ENCODE measurements at regions of chr16 and their contacts with region 1.

Region 1: GRCh38 chr16:84617791-84618580 is at the start of gene COTL1:
- DNase-seq: peak; percentile 97
- H3K4me3 ChIP-seq: peak within 1 kb of the TSS; percentile 75 to 93 (median 91)
- H3K27ac ChIP-seq: peak within 1 kb of the TSS; percentile 77
- H3K4me1 ChIP-seq: peaks cover 36% of the 10 kb centered on the region
- H3K27me3 ChIP-seq: no peaks in the 10 kb centered on the region
- CTCF ChIP-seq: no peak
- total RNA-seq, gene COTL1: 79.2 to 202 TPM

Region 2: GRCh38 chr16:84277237-84277823 is 340.7 kb before region 1 on chr16:
- CTCF ChIA-PET with region 1: no interaction called
- dilution Hi-C with region 1: no loop called
- in situ Hi-C with region 1: no loop called
- intact Hi-C with region 1: loop called (anchors 1 kb)
- DNase-seq: peak; percentile 8
- H3K4me3 ChIP-seq: no peak overlapping the region
- H3K27ac ChIP-seq: no peak overlapping the region
- H3K4me1 ChIP-seq: no peaks in the 10 kb centered on the region
- H3K27me3 ChIP-seq: no peaks in the 10 kb centered on the region
- CTCF ChIP-seq: peak; percentile 84 to 87

Region 3: DNA sequence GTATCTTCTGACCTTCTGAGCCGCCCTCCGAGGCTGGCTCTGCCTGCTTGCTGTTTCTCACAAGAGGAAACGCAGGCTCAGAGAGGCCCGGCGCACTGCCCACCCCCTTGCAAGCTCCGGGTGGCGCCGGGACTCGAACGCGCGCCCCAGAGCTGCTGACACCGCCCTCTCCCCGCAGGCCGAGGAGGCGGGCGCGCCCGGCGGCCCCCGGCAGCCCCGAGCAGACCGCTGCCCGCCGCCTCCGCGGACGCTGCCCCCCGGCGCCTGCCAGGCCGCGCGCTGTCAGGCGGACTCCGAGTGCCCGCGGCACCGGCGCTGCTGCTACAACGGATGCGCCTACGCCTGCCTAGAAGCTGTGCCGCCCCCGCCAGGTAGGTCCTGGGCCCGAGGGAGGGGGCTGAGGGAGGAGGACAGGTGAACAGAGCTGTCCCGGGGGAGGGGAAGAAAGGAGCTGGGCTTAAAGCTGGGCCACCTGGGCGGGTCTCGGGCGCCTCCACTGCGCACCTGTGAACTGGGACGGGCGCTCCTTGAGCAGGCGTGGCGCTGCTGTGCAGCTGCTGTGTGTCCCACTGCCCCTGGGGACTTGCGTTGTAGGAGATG is 305.1 kb before region 1 on chr16:
- CTCF ChIA-PET with region 1: no interaction called
- dilution Hi-C with region 1: no loop called
- in situ Hi-C with region 1: no loop called
- intact Hi-C with region 1: no loop called
- DNase-seq: no peak
- H3K4me3 ChIP-seq: no peak overlapping the region
- H3K27ac ChIP-seq: no peak overlapping the region
- H3K4me1 ChIP-seq: no peaks in the 10 kb centered on the region
- H3K27me3 ChIP-seq: peaks cover 9% of the 10 kb centered on the region
- CTCF ChIP-seq: no peak

Region 4: GRCh38 chr16:84532291-84532724 is 85.7 kb before region 1 on chr16:
- CTCF ChIA-PET with region 1: no interaction called
- dilution Hi-C with region 1: no loop called
- in situ Hi-C with region 1: no loop called
- intact Hi-C with region 1: loop called (anchors 5 kb)
- DNase-seq: peak; percentile 88
- H3K4me3 ChIP-seq: peak overlapping the region in 1 of 3 experiments; percentile 3
- H3K27ac ChIP-seq: peak overlapping the region; percentile 64
- H3K4me1 ChIP-seq: peaks cover 23% of the 10 kb centered on the region
- H3K27me3 ChIP-seq: no peaks in the 10 kb centered on the region
- CTCF ChIP-seq: no peak

Region 5: GRCh38 chr16:84599521-84600202 is 18.3 kb before region 1 on chr16:
- CTCF ChIA-PET with region 1: no interaction called
- dilution Hi-C with region 1: no loop called
- in situ Hi-C with region 1: no loop called
- intact Hi-C with region 1: no loop called
- DNase-seq: peak; percentile 16
- H3K4me3 ChIP-seq: no peak overlapping the region
- H3K27ac ChIP-seq: no peak overlapping the region
- H3K4me1 ChIP-seq: peaks cover 21% of the 10 kb centered on the region
- H3K27me3 ChIP-seq: no peaks in the 10 kb centered on the region
- CTCF ChIP-seq: no peak

Region 6: DNA sequence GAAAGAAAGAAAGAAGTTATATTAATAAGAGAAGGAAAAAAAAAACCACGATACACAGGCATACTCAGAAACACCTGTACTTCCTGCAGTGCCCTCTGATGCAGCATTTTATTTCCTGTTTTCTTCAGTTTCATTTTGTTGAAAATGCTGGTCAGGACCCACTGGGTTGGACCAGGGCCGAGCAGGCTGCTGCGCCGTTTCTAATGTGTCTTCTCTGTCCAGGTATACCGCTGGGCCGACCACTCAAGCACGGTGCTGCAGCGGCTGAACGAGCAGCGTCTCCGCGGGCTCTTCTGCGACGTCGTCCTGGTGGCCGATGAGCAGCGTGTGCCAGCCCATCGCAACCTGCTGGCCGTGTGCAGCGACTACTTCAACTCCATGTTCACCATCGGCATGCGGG is 38.7 kb after region 1 on chr16:
- CTCF ChIA-PET with region 1: no interaction called
- dilution Hi-C with region 1: no loop called
- in situ Hi-C with region 1: no loop called
- intact Hi-C with region 1: no loop called
- DNase-seq: no peak
- H3K4me3 ChIP-seq: no peak overlapping the region
- H3K27ac ChIP-seq: no peak overlapping the region
- H3K4me1 ChIP-seq: no peaks in the 10 kb centered on the region
- H3K27me3 ChIP-seq: no peaks in the 10 kb centered on the region
- CTCF ChIP-seq: no peak

Region 7: DNA sequence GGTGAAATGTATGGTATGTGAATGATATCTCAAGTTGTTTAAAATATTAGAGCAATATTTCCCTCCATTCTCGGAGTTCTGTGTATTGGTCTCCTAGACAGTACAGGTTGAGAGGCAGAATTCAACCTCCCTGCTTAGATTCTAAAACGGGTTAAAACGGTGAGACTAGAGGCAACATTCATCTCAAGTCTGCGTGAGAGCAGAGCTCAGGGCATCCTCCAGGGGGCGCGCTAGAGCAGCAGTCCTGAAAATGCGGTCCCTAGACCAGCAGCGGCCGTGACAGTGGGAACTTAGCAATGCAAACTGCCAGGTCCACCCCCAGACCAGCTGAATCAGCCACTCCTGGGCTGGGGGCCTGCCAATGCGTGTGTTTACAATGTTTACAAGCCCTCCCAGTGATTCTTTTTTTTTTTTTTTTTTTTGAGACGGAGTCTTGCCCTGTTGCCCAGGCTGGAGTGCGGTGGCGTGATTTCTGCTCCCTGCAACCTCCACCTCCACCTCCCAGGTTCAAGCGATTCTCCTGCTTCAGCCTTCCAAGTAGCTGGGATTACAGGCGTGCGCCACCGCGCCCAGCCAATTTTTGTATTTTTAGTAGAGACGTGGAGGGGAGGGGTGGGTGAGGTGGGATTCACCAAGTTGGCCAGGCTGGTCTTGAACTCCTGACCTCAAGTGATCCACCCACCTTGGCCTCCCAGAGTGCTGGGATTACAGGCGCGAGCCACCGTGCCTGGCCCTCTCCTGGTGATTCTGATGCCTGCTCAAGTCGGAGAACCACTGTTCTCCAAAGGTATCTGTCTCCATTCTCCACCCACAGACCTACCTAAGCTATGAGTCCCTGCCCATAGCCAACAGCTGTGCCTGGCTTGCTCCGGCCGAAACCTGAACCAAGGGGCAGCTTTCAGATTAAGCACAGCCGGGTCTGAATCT is 54.6 kb after region 1 on chr16:
- CTCF ChIA-PET with region 1: no interaction called
- dilution Hi-C with region 1: no loop called
- in situ Hi-C with region 1: no loop called
- intact Hi-C with region 1: loop called (anchors 1 kb)
- DNase-seq: peak; percentile 39
- H3K4me3 ChIP-seq: no peak overlapping the region
- H3K27ac ChIP-seq: no peak overlapping the region
- H3K4me1 ChIP-seq: no peaks in the 10 kb centered on the region
- H3K27me3 ChIP-seq: no peaks in the 10 kb centered on the region
- CTCF ChIP-seq: peak; percentile 97

Region 8: GRCh38 chr16:84738255-84739038 is 120.5 kb after region 1 on chr16:
- CTCF ChIA-PET with region 1: interaction called, 3 read pairs
- dilution Hi-C with region 1: no loop called
- in situ Hi-C with region 1: no loop called
- intact Hi-C with region 1: loop called (anchors 1 kb)
- DNase-seq: peak; percentile 72
- H3K4me3 ChIP-seq: no peak overlapping the region
- H3K27ac ChIP-seq: no peak overlapping the region
- H3K4me1 ChIP-seq: peaks cover 40% of the 10 kb centered on the region
- H3K27me3 ChIP-seq: no peaks in the 10 kb centered on the region
- CTCF ChIP-seq: peak; percentile 87 to 94